Activated CD4-positive, alpha-beta T cell treated with anti-CD3 and anti-CD28 coated beads, Interleukin-2, amount 10 ng/mL, durations not matched to agents 7 days and 5 days (primary cell): ENCODE measurements at regions of chr3 and their contacts with region 1.

Region 1: DNA sequence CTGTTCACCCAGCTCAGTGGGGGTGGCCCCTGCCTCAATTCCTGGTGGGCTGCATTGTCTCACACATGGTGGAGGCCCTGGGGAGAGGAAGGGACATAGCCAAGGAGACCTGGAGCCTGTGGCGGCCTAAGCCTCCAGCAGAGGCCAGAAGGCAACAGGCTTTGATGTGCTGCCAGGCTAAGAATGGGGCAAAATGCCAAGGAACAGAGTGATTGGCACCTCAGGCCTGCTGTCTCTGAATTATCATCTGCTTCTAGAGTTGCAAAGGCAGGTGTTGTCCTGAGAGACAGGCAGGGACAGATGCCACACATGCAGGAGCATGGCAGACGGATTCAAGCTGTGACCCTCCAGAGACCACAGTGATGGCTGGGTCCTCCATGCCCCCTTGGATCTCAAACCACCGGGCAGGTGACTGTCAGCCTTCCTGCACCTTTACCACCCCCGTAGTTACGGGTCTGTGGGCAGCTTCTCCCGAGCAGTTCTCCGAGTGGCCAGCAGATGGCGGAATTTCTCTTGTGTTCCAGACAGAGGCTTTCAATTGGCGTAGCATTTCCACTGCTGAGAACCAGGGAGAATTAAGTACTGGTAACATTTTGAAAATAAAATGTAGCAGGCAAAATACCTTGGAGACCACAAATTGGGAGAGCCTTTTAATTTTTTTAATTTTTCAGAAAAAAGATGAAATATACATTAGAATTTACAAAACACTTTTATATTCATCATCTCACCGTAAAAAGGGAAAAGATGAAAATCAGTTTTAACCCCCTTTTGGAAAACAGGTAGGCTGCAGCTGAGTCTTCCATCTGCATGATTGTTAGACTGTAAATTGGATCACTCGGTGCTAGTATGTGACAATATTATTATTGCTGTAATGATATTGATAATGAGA is 525.5 kb upstream of the CFAP20DC start:
- DNase-seq: peak; percentile 89
- H3K4me3 Mint-ChIP-seq: no peak overlapping the region
- H3K27ac Mint-ChIP-seq: peak overlapping the region; percentile 68
- H3K4me1 Mint-ChIP-seq: peaks cover 6% of the 10 kb centered on the region
- H3K27me3 Mint-ChIP-seq: no peaks in the 10 kb centered on the region

Region 2: DNA sequence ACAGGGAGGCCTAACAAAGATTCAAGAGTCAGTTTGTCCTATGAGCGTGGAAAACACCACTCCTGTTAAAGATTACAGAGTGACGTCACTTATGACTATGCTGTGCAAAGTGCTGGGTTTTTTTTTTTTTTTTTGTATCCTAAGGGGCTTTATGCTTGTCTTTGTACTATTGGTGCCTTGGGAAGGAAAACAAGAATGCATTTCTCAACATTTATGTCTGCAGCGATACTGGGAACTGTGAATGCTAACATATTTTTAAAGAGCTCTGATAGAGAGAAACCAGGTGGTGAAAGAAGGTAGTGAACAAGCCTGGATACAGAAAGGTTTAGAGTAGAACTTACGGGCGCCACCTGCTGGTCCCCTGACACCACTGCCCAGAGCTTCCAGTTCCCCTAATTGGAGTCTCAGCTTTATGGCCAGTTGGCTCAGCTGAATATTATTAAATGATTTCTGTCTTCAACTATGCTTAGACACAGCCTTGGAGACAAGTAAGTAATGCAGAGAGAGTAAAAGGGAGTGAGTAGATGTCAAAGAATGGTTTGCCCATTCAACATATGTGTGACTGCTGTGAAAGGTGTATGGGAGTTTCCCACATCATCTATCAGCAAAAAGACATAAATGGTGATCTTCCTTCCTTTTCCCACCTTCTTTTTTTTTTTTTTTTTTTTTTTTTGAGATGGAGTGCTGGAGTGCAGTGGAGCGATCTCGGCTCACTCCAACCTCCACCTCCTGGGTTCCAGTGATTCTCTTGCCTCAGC is 282.4 kb after region 1 on chr3:
- CTCF ChIA-PET with region 1: interaction called, 11 read pairs
- POLR2A ChIA-PET with region 1: no interaction called
- DNase-seq: peak; percentile 81
- H3K4me3 Mint-ChIP-seq: no peak overlapping the region
- H3K27ac Mint-ChIP-seq: no peak overlapping the region
- H3K4me1 Mint-ChIP-seq: peaks cover 12% of the 10 kb centered on the region
- H3K27me3 Mint-ChIP-seq: no peaks in the 10 kb centered on the region